BJ (cell line): ENCODE measurements at regions of chr3 and their contacts with region 1.

Region 1: GRCh38 chr3:184811999-184812661 is at the start of gene VPS8:
- DNase-seq: peak; percentile 75
- H3K4me3 ChIP-seq: peak within 1 kb of the TSS; percentile 65
- H3K27me3 ChIP-seq: no peaks in the 10 kb centered on the region
- CTCF ChIP-seq: peak; percentile 63
- polyA plus RNA-seq, gene VPS8: 14.3 and 28.7 TPM in 2 replicates

Region 2: GRCh38 chr3:184523825-184524615 is 288.1 kb before region 1 on chr3:
- CTCF ChIA-PET with region 1: no interaction called
- POLR2A ChIA-PET with region 1: no interaction called
- DNase-seq: no peak
- H3K4me3 ChIP-seq: no peak overlapping the region
- H3K27me3 ChIP-seq: peaks cover 10% of the 10 kb centered on the region
- CTCF ChIP-seq: no peak

Region 3: DNA sequence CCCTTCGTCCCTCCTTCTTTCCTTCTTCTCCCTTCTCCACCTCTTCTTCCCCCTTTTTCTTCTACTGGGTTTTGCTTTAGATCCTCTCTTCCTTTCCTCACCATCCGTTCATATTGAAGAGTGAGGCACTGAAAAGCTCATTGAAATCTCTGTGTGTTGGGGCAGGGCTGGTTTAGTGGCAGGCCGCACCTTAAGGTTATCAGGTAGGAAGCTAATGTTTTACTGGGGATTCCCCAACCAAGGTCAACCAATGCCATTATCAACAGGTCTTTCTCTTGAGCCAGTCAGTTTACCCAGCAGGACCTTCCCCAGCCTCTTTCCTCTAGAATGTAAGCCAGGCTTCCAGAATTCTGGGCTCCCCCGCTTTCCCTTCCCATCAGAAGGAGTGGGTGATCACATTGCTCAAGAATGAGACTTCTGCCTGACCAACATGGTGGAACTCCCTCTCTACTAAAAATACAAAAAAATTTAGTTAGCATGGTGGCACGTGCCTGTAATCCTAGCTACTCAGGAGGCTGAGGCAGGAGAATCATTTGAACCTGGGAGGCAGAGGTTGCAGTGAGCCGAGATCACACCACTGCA is 11.7 kb before region 1 on chr3:
- CTCF ChIA-PET with region 1: interaction called, 10 read pairs
- POLR2A ChIA-PET with region 1: no interaction called
- DNase-seq: no peak
- H3K4me3 ChIP-seq: no peak overlapping the region
- H3K27me3 ChIP-seq: peaks cover 2% of the 10 kb centered on the region
- CTCF ChIP-seq: no peak

Region 4: DNA sequence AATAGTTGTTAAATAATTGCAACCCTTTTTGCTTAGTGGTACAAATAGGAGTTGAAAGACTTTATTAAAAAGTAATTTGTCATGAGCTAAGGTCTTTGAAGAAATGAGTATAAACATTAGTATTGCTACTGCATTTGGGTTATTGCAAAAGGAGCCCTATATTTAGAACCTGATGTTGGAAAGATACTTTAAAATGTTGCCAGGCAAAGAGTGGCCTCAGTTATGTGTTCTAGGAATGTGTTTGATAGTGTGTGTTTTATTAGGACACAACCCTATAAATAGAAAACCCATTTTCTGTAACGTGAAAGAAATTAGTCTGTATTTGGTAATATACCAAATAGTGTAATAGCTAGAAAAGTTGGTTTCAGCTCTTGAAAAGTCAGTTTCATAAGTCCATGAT is 10.5 kb after region 1 on chr3:
- CTCF ChIA-PET with region 1: interaction called, 16 read pairs
- POLR2A ChIA-PET with region 1: no interaction called
- DNase-seq: no peak
- H3K4me3 ChIP-seq: no peak overlapping the region
- H3K27me3 ChIP-seq: no peaks in the 10 kb centered on the region
- CTCF ChIP-seq: no peak

Region 5: DNA sequence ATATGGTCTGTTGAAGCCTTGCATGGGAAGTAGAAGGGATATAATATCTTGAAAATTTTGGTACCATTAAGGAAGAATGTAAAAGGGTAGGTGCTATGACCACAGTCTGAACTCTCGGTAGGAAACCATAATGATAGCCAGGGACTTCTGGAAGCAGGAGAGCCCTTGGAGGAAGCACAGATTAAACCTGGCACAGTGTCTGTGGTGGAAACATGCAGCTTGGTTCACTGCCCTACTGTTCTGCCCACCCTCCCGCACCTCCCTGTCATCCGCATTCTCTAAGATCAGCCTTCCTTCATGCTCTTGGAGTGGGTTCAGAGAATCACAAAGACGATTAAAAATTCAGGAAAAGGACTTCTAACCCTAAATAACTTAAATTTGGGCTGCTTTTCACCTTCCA is 20.8 kb after region 1 on chr3:
- CTCF ChIA-PET with region 1: no interaction called
- POLR2A ChIA-PET with region 1: no interaction called
- DNase-seq: no peak
- H3K4me3 ChIP-seq: no peak overlapping the region
- H3K27me3 ChIP-seq: no peaks in the 10 kb centered on the region
- CTCF ChIP-seq: no peak